Spleen (tissue), 13 donors: ENCODE measurements at regions of chr6 and their contacts with region 1.

Region 1: DNA sequence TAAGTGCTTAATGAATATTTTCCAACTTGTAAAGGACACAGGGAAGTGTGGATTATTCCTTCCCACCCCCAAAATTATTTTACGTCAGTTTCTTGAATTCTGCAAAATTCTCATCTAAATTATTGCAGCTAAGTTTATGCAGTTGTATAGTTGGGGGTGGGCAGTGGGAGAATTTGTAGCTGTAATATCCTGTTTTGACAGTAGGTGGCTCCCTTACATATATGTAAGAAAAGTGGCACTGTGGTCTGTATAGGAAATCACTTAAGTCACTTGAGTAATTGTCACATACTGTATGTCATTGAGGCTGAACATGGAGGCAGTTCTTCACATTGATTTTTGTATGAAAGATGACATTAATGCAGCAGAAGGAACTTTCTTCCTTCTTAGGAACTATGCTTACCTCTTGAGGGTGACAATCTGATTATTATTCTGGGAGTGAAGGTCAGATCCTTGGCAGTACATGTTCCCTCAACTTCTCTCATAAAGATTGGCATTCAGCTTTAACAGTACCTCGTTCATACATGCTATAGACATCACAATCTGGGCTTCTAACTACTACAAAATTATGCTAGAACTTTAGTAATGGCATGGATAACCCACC is 14.7 kb upstream of the CFAP206 start:
- DNase-seq: no peak
- H3K4me3 ChIP-seq: no peak overlapping the region
- H3K27ac ChIP-seq: no peak overlapping the region
- H3K4me1 ChIP-seq: no peaks in the 10 kb centered on the region
- H3K27me3 ChIP-seq: no peaks in the 10 kb centered on the region
- CTCF ChIP-seq: peak; percentile 57 to 84 (median 77)
- POLR2A ChIP-seq: no peak

Region 2: DNA sequence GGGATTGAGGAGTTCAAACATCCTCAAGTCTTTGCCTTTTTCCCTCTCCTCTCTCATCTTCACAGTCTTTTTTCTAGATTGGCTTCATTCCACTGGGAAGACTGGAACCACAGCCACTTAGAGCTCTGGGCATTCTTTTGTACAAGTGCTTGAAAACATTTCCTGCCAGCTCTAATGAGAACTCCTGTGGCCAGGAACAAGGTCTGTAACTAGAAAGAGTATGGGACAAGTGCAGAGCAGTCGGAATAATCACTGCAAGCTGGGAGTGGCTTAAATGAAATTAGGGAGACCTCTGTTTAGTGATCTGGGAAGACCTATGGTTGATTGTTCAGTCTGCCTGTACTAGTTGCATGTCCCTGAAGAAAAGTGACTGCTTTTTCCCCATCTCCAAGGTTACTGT is 111.7 kb before region 1 on chr6:
- intact Hi-C with region 1: no loop called
- DNase-seq: no peak
- H3K4me3 ChIP-seq: no peak overlapping the region
- H3K27ac ChIP-seq: no peak overlapping the region
- H3K4me1 ChIP-seq: no peaks in the 10 kb centered on the region
- H3K27me3 ChIP-seq: no peaks in the 10 kb centered on the region
- CTCF ChIP-seq: no peak
- POLR2A ChIP-seq: no peak

Region 3: GRCh38 chr6:87799651-87800050 is 406.5 kb after region 1 on chr6:
- intact Hi-C with region 1: loop called (anchors 5 kb)
- DNase-seq: no peak
- H3K4me3 ChIP-seq: no peak overlapping the region
- H3K27ac ChIP-seq: no peak overlapping the region
- H3K4me1 ChIP-seq: peaks cover 5 to 66% (median 39%) of the 10 kb centered on the region in 6 donors
- H3K27me3 ChIP-seq: no peaks in the 10 kb centered on the region
- CTCF ChIP-seq: no peak
- POLR2A ChIP-seq: no peak

Region 4: GRCh38 chr6:88870717-88871330 is 1477.7 kb after region 1 on chr6:
- intact Hi-C with region 1: loop called (anchors 5 kb)
- DNase-seq: no peak
- H3K4me3 ChIP-seq: no peak overlapping the region
- H3K27ac ChIP-seq: no peak overlapping the region
- H3K4me1 ChIP-seq: peaks cover 0 to 38% (median 0%) of the 10 kb centered on the region in 6 donors
- H3K27me3 ChIP-seq: no peaks in the 10 kb centered on the region
- CTCF ChIP-seq: peak; percentile 11 to 70 (median 57)
- POLR2A ChIP-seq: no peak